GM10248 (cell line): ENCODE measurements at regions of chr12 and their contacts with region 1.

Region 1: DNA sequence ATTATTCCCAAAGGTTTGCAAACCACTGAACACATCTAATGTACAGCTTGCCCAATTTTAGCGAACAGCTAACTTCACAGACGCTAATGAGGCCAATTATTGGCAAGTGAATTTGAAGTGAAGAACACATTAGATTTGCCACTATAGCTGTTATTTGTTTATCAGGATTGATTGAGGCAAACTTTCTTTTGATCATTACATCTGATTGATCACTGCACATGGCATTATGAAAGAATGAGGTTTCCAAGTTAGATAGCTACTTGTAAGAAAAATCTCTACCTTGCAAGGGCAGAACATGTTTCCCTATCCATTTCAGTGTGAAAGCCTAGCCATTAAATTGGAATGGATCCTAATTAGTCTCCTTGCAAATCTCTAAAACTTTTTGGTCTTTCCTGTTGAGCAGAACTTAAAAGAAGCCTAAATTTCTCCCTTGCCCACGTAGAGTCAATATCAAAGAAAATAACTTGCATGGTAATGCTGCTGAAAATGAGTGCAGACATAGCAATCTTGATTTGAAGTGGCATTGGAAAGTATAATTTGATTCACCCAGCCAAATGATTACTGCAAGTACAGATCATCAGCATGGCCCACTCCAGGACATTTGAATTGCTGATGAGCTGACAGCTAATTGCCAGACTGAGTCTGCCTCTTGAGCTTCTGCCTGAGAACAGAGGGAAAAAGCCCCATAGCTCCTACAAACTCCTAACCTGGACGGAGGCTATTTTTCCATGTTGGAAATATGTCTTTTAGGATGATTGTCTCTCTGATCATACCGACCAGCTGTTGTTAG is 98.6 kb downstream of the TPH2 start:
- DNase-seq: no peak
- CTCF ChIP-seq: no peak

Region 2: GRCh38 chr12:71888521-71888920 is 148.7 kb before region 1 on chr12:
- CTCF ChIA-PET with region 1: no interaction called
- POLR2A ChIA-PET with region 1: no interaction called
- DNase-seq: no peak
- CTCF ChIP-seq: no peak

Region 3: DNA sequence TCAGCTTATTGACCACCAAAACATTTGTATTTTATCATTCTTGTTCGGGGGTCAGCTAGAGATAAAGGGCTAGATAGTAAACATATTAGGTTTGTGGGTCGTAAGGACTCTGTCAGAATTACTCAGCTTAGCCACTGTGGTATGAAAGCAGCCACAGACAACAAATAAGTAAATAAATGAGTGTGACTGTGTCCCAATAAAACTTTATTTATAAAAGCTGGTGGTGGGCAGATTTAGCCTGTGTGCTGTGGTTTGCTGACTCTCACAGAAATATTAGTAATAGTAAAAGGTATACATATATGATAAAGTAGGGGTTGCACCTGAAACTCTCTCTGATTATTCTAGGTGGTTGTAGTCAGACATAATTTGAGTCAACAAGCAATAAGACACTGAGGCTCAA is 42.5 kb before region 1 on chr12:
- CTCF ChIA-PET with region 1: no interaction called
- POLR2A ChIA-PET with region 1: no interaction called
- DNase-seq: no peak
- CTCF ChIP-seq: no peak

Region 4: GRCh38 chr12:72024613-72025012 is 12.6 kb before region 1 on chr12:
- CTCF ChIA-PET with region 1: interaction called, 14 read pairs
- POLR2A ChIA-PET with region 1: no interaction called
- DNase-seq: no peak
- CTCF ChIP-seq: no peak